ENCODE measurements at regions of chr3 and their contacts with region 1.

Region 1: DNA sequence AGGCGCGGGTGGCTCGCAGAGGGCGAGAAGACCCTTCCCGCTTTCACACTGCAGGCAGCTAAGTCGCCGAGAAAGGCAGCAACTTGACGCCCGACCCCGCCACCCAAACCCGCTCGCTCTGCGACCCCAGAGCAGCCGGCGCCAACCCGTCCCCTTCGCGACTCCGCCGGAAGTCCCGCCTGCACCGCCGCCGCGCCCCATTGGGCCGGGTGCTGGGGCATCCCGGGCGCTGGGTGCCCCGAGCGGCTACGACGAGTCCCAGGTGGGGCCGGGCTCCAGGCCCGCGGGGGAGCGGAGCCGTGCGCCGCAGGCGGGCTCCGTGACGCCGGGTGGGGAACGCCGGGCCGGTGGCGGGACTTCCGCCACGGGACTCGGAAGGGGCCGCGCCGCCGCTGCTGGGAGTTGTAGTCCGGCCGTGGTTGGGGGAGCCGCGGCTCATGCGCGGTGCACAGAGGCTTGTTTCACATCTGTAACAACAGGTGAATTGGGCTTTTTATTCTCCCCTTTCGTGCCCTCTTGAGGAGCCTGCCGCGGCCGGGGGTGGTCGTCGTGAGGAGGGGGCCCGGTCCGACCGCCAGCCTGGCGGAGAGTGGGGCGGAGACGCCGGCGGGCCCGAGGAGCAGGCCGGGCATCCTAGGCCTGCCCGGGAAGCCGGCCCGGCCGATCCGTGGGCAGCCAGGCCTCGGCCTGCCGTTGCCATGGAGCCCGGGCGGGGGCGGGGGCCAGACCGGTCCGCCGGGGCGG is at the start of gene DHX30:
- DNase-seq: peak in 1 of 2 experiments; percentile 91
- H3K4me3 ChIP-seq: peak within 1 kb of the TSS; percentile 81 to 96 (median 92)
- H3K27ac ChIP-seq: peak within 1 kb of the TSS; percentile 83
- H3K4me1 ChIP-seq: peaks cover 0 to 4% (median 2%) of the 10 kb centered on the region in 4 experiments; a peak in 3 of 7 replicates
- H3K27me3 ChIP-seq: no peaks in the 10 kb centered on the region
- CTCF ChIP-seq: no peak
- EP300 ChIP-seq: no peak
- POLR2A ChIP-seq: peak; percentile 35 to 41
- RAD21 ChIP-seq: no peak
- total RNA-seq, gene DHX30: 97.7 and 97.9 TPM in 2 replicates

Region 2: DNA sequence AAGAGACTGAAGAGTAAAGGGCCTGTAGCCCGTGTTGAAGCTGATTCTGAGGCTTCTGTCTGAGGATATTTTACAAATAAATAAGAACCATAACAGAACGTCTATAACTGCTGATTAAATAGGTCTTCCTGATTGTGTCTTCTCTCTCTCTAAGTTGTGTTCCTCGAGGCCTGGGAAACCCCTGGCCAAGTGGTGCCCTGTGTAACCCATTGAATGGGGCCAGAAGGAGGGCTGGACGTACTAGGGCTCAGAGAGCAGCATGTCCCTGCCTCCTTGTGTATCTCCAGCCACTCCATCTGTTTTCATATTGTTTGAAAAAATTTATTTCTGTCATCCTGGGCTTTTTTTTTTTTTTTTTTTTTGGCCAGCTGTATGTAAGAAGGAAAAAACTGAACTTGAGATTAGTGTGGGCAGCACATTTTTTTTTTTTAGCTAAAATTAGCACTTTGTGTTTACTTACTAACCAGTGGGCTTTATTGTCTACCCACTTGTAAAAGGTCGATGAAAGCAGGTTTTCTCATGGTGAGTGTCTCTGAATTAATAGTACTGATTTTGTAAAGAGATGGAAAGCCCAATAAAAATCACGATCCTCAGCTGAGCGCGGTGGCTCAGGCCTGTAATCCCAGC is 10.8 kb after region 1 on chr3:
- CTCF ChIA-PET with region 1: interaction called, 3 read pairs
- POLR2A ChIA-PET with region 1: interaction called, 10 read pairs
- DNase-seq: no peak
- H3K4me3 ChIP-seq: no peak overlapping the region
- H3K27ac ChIP-seq: no peak overlapping the region
- H3K4me1 ChIP-seq: no peaks in the 10 kb centered on the region
- H3K27me3 ChIP-seq: no peaks in the 10 kb centered on the region
- CTCF ChIP-seq: no peak
- EP300 ChIP-seq: no peak
- POLR2A ChIP-seq: no peak
- RAD21 ChIP-seq: no peak

Region 3: DNA sequence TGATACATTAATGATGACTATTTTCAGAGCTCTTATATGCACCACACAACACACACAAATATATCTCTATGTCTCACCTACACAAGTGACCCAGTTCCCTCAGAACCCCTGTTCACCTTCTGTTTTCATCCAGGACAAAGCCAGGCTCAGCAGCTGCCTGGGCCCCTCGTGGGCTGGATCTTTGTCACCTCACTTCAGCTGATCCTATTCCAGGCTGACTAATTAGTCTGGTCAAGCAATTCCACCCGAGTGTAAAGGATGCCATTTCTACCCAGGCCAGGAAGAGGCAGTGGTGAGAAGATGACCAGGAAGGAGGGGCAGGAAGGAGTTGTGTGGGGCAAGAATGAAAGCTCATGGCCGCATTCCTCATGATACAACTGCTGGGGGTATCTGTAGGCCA is 62.3 kb after region 1 on chr3:
- CTCF ChIA-PET with region 1: no interaction called
- POLR2A ChIA-PET with region 1: no interaction called
- DNase-seq: no peak
- H3K4me3 ChIP-seq: no peak overlapping the region
- H3K27ac ChIP-seq: no peak overlapping the region
- H3K4me1 ChIP-seq: no peaks in the 10 kb centered on the region
- H3K27me3 ChIP-seq: no peaks in the 10 kb centered on the region
- CTCF ChIP-seq: peak in 1 of 3 experiments; percentile 28; a peak in 2 of 4 replicates
- EP300 ChIP-seq: no peak
- POLR2A ChIP-seq: no peak
- RAD21 ChIP-seq: peak; percentile 30 to 43; a peak in 3 of 4 replicates

Measured in H1 (cell line).